ENCODE measurements at regions of chr14 and their contacts with region 1.

Region 1: GRCh38 chr14:37924622-37925021 is 283.1 kb upstream of the SSTR1 start:
- DNase-seq: no peak
- ATAC-seq: no peak
- H3K4me3 ChIP-seq: no peak overlapping the region
- H3K27ac ChIP-seq: no peak overlapping the region
- H3K4me1 ChIP-seq: no peaks in the 10 kb centered on the region
- H3K27me3 ChIP-seq: peaks cover 0 to 3% (median 0%) of the 10 kb centered on the region in 7 donors
- CTCF ChIP-seq: no peak

Region 2: DNA sequence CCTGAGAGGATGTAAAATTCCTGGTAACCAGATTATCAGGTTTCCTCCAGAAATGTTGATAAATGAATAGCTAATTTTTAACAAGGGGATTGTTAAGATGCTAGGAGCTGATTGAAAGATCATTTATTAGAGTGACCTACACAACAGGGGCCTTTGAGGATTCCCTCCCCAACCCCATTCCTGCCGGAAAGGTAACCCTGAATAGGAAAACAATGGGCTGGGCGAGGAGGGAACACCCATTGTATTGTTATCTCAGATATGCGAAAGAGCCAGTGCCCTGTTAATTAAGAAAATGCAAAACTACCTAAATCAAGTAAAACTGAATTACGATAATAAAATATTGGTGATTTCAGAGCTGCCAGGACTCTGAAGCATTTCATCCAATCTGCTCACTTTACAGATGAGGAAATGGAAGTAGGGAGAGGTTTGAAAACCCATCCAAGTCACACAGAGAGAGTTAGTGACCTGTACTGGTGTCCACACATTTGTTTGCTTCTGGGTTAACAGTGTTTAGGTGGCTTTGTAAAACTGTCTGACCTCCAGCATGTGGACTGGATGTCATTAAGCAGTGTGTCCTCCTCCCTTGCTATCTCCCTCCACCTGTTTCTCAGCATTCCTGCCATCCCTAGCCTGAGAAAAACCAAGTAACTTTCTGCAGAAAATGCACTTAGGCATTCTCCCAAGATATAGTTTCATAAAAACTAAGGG is 114.4 kb before region 1 on chr14:
- intact Hi-C with region 1: no loop called
- DNase-seq: no peak
- ATAC-seq: no peak
- H3K4me3 ChIP-seq: no peak overlapping the region
- H3K27ac ChIP-seq: no peak overlapping the region
- H3K4me1 ChIP-seq: no peaks in the 10 kb centered on the region
- H3K27me3 ChIP-seq: peaks cover 0 to 7% (median 0%) of the 10 kb centered on the region in 7 donors
- CTCF ChIP-seq: no peak

Region 3: GRCh38 chr14:39641224-39641623 is 1716.6 kb after region 1 on chr14:
- intact Hi-C with region 1: loop called in 1 of 10 experiments (anchors 5 kb)
- DNase-seq: no peak
- ATAC-seq: no peak
- H3K4me3 ChIP-seq: no peak overlapping the region
- H3K27ac ChIP-seq: no peak overlapping the region
- H3K4me1 ChIP-seq: no peaks in the 10 kb centered on the region
- H3K27me3 ChIP-seq: no peaks in the 10 kb centered on the region
- CTCF ChIP-seq: no peak